HEK293T (cell line): ENCODE measurements at regions of chr2 and their contacts with region 1.

Region 1: DNA sequence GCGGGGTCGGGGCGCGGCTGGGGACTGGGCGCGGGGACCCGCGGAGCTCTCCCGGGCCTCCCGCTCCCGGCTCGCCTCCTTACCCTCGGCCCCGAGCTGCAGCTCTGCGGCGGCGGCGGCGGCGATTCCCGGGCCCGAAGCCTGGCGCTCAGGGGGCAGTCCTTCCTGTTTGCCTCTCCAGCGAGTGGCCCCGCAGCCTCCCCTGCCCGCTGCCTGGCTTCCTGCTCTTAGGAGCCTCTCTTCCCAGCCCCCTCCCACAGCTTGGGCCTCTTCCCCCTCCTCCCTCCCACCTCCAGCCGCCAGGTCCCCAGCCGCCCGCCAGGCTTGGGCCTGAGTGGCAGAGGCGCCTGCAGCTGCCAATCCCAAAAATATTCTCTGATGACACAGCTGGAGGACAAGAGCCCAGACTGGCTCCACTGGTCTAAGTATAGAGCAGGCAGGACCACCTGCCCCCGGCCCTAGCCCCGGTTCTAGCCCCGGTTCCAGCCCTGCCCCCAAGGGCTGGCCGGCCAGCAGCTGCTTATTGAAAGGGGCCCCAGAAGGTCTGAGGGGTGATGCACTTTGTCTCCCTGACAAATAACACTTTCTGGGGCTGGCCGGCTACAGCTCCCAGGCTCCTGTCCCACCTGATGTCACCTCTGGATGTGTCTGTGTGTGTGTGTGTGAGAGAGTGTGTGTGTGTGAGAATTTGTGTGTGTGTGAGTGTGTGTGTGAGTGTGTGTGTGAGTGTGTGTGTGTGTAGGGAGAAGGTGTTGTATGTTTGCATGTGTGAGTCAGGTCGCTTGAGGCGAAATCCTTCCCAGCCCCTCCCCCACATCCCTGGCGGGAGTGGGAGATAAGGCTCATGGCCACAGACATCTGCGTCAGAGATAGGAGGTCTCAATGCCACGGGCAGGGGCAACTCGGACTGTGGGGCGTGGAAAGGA is at the start of gene OBSL1:
- DNase-seq: peak; percentile 77

Region 2: GRCh38 chr2:219498280-219499057 is 73.1 kb before region 1 on chr2 and contains the start of gene GMPPA:
- CTCF ChIA-PET with region 1: no interaction called
- POLR2A ChIA-PET with region 1: no interaction called
- DNase-seq: peak; percentile 94

Region 3: GRCh38 chr2:219560037-219560892 is 11.3 kb before region 1 on chr2:
- CTCF ChIA-PET with region 1: interaction called, 16 read pairs
- POLR2A ChIA-PET with region 1: interaction called, 10 read pairs
- DNase-seq: peak; percentile 52

Region 4: DNA sequence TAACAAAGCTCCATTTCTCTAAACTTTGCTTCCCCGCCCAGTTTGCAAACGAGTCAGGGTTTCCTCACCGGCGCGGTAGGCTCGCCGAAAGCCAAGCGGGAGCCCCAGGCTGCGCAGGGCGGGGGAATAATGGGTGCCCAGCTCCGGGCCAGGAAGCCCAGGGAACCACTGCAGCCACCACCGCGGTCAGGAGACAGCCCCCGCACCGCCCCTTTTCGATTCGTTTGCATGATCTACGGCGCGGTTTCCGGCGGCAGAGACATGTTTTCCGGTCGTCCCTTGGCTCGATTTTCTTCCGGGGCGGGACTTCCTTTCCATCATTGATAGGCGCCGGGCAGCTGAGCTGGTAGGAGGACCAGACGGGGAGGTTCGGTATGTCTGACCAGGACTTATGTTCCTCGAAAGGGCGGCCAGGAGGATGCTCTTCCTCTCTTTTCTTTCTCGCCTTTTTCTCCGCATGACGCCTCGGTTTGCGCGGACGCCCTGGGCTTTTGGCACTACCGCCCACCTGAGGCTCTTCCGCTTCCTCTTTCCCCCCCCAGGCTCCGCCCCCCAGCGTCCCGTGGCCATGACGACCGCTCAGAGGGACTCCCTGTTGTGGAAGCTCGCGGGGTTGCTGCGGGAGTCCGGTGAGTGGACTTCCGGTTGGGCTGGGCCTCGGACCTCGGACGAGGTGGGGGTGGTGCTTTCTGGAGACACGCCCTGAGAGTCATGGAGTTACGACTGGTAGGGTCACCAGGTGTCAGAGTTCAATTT is 26.2 kb after region 1 on chr2 and contains the start of gene STK11IP:
- CTCF ChIA-PET with region 1: no interaction called
- POLR2A ChIA-PET with region 1: interaction called, 28 read pairs
- DNase-seq: peak; percentile 96